Activated B cell treated with CpG ODN at 0.5 μM for 24 hours (primary cell): ENCODE measurements at regions of chr6 and their contacts with region 1.

Region 1: GRCh38 chr6:33317669-33318425 is at the start of gene ZBTB22:
- DNase-seq: peak; percentile 91
- ATAC-seq: peak; percentile 59
- H3K4me3 Mint-ChIP-seq: peak within 1 kb of the TSS; percentile 99
- H3K27ac Mint-ChIP-seq: peak within 1 kb of the TSS; percentile 98
- H3K4me1 Mint-ChIP-seq: peaks cover 84% of the 10 kb centered on the region
- H3K27me3 Mint-ChIP-seq: no peaks in the 10 kb centered on the region
- CTCF ChIP-seq: no peak
- total RNA-seq, gene ZBTB22: 31.6 and 31.8 TPM in 2 replicates

Region 2: GRCh38 chr6:33271458-33272274 is 46.2 kb before region 1 on chr6 and contains the starts of genes RPS18 and VPS52:
- CTCF ChIA-PET with region 1: interaction called, 12 read pairs
- POLR2A ChIA-PET with region 1: interaction called, 41 read pairs
- intact Hi-C with region 1: loop called (anchors 1 kb)
- DNase-seq: peak; percentile 79
- ATAC-seq: peak; percentile 84
- H3K4me3 Mint-ChIP-seq: peak within 1 kb of the TSS; percentile 100
- H3K27ac Mint-ChIP-seq: peak within 1 kb of the TSS; percentile 100
- H3K4me1 Mint-ChIP-seq: peaks cover 59% of the 10 kb centered on the region
- H3K27me3 Mint-ChIP-seq: no peaks in the 10 kb centered on the region
- CTCF ChIP-seq: no peak
- total RNA-seq, gene RPS18: 4,710 and 5,877 TPM in 2 replicates
- total RNA-seq, gene VPS52: 82.0 and 97.2 TPM in 2 replicates

Region 3: DNA sequence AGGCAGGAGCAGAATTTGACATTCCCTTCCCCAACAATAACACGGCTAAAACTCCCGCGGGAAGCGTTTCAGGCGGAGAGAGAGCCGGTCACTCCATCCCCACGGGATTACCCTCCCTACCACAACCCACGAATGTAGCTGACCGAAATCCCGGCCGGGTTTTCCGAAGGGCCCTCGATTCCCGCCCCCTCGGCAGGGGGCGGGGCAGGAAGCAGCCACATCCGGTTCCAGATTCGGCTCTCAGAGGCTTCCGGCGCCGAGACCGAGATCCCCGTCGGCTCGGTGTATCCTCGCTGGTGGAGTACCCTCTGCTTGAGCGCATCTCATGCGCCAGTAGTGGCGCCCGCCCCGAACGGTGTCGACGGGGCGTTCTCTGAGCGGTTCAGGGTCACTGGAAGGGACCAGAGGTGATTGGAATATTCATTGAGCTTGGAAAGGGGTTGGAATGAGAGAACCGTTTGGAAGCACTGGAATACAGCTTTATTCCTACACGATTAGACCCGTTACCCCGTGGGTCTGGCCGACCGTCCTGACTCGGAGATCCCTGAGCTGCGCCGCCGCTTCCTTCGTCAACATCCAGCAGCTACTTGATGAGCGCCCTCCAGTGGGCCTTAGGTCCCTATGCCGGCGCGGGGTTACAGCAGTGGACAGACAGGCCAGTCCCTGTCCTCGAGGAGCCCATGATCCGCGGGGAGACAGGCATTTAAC is 18.5 kb before region 1 on chr6:
- CTCF ChIA-PET with region 1: interaction called, 9 read pairs
- POLR2A ChIA-PET with region 1: interaction called, 80 read pairs
- intact Hi-C with region 1: loop called (anchors 1 kb)
- DNase-seq: peak; percentile 90
- ATAC-seq: peak; percentile 67
- H3K4me3 Mint-ChIP-seq: peak overlapping the region; percentile 96
- H3K27ac Mint-ChIP-seq: peak overlapping the region; percentile 98
- H3K4me1 Mint-ChIP-seq: peaks cover 34% of the 10 kb centered on the region
- H3K27me3 Mint-ChIP-seq: no peaks in the 10 kb centered on the region
- CTCF ChIP-seq: no peak

Region 4: GRCh38 chr6:33391278-33391921 is 73.6 kb after region 1 on chr6 and contains the start of gene KIFC1:
- CTCF ChIA-PET with region 1: no interaction called
- POLR2A ChIA-PET with region 1: interaction called, 3 read pairs
- intact Hi-C with region 1: loop called (anchors 1 kb)
- DNase-seq: peak; percentile 95
- ATAC-seq: peak; percentile 88
- H3K4me3 Mint-ChIP-seq: peak within 1 kb of the TSS; percentile 79
- H3K27ac Mint-ChIP-seq: peak within 1 kb of the TSS; percentile 95
- H3K4me1 Mint-ChIP-seq: peaks cover 25% of the 10 kb centered on the region
- H3K27me3 Mint-ChIP-seq: no peaks in the 10 kb centered on the region
- CTCF ChIP-seq: peak; percentile 77
- total RNA-seq, gene KIFC1: 1.9 and 2.2 TPM in 2 replicates

Region 5: GRCh38 chr6:33425668-33426577 is 108.1 kb after region 1 on chr6:
- CTCF ChIA-PET with region 1: no interaction called
- POLR2A ChIA-PET with region 1: interaction called, 12 read pairs
- intact Hi-C with region 1: no loop called
- DNase-seq: peak; percentile 68
- ATAC-seq: peak; percentile 60
- H3K4me3 Mint-ChIP-seq: peak overlapping the region; percentile 87
- H3K27ac Mint-ChIP-seq: peak overlapping the region; percentile 89
- H3K4me1 Mint-ChIP-seq: peaks cover 66% of the 10 kb centered on the region
- H3K27me3 Mint-ChIP-seq: no peaks in the 10 kb centered on the region
- CTCF ChIP-seq: no peak